ENCODE measurements at regions of chr18 and their contacts with region 1.

Region 1: GRCh38 chr18:47077111-47077510 is 41.7 kb upstream of the ELOA2 start:
- DNase-seq: no peak
- H3K4me3 ChIP-seq: no peak overlapping the region
- CTCF ChIP-seq: no peak
- POLR2A ChIP-seq: no peak

Region 2: DNA sequence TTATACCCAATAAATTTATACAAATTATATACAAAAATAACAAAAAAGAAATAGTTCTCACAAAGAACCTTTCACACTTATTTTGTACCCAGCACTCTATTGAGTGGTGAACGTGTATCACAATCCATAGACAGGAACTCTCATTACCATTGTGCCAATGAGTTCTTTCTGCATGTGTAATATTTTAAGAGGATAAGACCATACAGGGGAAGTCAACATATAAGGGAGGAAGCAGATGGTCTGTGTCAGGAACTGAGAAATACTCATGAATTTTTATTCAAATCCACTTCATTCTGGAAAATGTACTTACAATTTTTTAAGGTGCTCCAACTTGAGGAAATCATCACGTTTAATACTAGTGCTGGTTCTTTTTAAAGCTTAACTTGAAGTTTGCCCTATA is 14.6 kb before region 1 on chr18:
- intact Hi-C with region 1: loop called (anchors 2 kb)
- DNase-seq: no peak
- H3K4me3 ChIP-seq: no peak overlapping the region
- CTCF ChIP-seq: no peak
- POLR2A ChIP-seq: no peak

Measured in lower leg skin (tissue), 4 donors.